PC-3 (cell line): ENCODE measurements at regions of chr1 and their contacts with region 1.

Region 1: DNA sequence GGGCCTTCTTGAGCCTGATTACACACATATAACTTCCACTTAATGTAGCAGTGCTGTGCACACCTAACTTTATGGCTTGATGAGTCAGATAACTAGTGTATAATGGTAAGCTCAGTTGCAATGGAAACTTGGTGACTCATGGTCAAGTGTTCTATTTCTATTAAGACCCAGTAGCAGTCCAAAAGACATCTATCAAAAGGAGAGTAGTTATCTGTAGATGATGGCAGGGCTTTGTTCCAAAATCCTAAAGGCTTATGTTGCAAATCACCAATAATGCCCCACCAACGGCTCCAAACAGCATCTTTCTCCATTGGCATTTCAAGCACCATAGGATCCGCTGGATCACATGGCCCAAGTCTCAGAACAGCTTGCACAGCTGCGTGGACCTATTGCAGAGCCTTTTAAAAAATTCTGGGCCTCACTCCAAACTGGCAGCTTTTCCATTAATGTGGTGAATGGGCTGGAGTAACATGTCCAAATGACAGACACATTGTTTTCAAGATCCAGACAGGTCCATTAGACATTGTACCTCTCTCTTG is 566.8 kb upstream of the USP24 start:
- DNase-seq: peak; percentile 93
- ATAC-seq: peak; percentile 97
- H3K4me3 ChIP-seq: no peak overlapping the region
- H3K27ac ChIP-seq: peak overlapping the region; percentile 79
- H3K4me1 ChIP-seq: peaks cover 31% of the 10 kb centered on the region
- H3K27me3 ChIP-seq: no peaks in the 10 kb centered on the region
- CTCF ChIP-seq: no peak

Region 2: DNA sequence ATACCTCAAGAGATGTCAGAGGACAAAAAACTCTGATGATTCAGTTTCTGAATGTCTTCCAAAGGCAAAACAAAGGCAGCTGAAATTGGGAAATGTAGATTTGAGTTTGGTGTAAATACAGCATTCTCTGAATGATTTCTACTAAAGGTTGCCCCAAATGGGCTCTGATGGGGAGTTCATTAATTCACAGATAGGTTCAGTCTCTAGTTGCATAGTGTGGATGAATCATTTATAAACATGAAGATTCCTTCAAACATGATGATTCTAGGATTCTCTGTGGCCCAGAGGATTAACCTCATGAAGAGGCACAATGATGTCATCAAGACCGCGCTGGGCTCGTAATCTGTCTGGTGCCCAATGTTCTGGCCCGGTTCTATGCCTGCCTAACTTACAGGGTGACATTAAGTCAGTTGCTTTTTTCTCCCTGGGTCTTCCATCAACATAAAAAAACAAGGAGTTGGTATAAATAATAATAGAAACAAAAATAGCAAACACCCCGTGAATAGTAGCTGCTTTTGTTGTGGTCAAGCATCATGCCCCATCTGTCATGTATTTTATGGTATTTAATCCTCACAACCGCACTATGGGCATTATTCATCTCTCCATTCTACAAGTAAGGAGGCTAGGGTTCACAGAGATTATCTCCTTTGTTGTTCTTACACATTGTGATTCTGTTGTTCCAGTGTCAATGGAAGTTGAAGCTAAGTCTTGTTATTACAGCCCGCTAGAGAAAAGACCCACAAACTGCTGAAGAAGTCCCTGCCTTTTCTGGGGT is 57.3 kb before region 1 on chr1:
- CTCF ChIA-PET with region 1: no interaction called
- POLR2A ChIA-PET with region 1: no interaction called
- intact Hi-C with region 1: loop called (anchors 2 kb)
- DNase-seq: peak; percentile 51
- ATAC-seq: no peak
- H3K4me3 ChIP-seq: peak overlapping the region; percentile 5; the same call in 1 of the 2 replicates
- H3K27ac ChIP-seq: peak overlapping the region; percentile 89
- H3K4me1 ChIP-seq: peaks cover 42% of the 10 kb centered on the region
- H3K27me3 ChIP-seq: no peaks in the 10 kb centered on the region
- CTCF ChIP-seq: no peak

Region 3: DNA sequence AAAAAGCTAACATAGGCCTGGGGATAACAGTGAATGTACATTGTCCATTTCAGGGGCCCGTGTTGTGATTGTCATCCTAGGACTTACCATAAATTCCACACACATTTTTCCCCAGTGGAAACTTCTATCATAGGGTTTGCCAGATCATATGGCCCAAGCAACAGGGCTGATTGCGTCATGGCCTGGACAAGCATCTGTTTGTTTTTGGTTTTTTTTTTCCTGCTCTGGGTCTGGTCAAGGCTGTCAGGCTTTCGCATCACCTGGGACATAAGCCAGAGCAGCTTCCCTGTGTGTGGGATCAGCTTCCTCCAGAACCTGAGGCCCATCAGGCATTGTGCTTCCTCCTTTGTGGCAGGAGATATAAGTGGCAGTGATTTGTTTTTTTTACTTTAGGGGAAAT is 31.6 kb after region 1 on chr1:
- CTCF ChIA-PET with region 1: no interaction called
- POLR2A ChIA-PET with region 1: no interaction called
- intact Hi-C with region 1: no loop called
- DNase-seq: peak; percentile 49
- ATAC-seq: no peak
- H3K4me3 ChIP-seq: no peak overlapping the region
- H3K27ac ChIP-seq: no peak overlapping the region
- H3K4me1 ChIP-seq: peaks cover 13% of the 10 kb centered on the region
- H3K27me3 ChIP-seq: no peaks in the 10 kb centered on the region
- CTCF ChIP-seq: no peak